Activated T-helper 2 cell treated with anti-CD3 and anti-CD28 coated beads, Interferon-gamma antibody, Interleukin-2, Interleukin-4, amounts not matched to agents 10 μg/mL and 5 μg/mL and 100 μg/mL, durations not matched to agents 14 hours and 24 hours and 36 hours (primary cell): ENCODE measurements at regions of chr20 and their contacts with region 1.

Region 1: GRCh38 chr20:2752567-2753460 is 47.6 kb downstream of the CPXM1 start:
- DNase-seq: peak; percentile 31
- H3K4me3 Mint-ChIP-seq: peak overlapping the region; percentile 77
- H3K27ac Mint-ChIP-seq: no peak overlapping the region
- H3K4me1 Mint-ChIP-seq: peaks cover 16% of the 10 kb centered on the region
- H3K27me3 Mint-ChIP-seq: peaks cover 54% of the 10 kb centered on the region

Region 2: GRCh38 chr20:2273634-2274302 is 479.0 kb before region 1 on chr20:
- intact Hi-C with region 1: no loop called
- DNase-seq: no peak
- H3K4me3 Mint-ChIP-seq: no peak overlapping the region
- H3K27ac Mint-ChIP-seq: no peak overlapping the region
- H3K4me1 Mint-ChIP-seq: no peaks in the 10 kb centered on the region
- H3K27me3 Mint-ChIP-seq: peaks cover 4% of the 10 kb centered on the region

Region 3: DNA sequence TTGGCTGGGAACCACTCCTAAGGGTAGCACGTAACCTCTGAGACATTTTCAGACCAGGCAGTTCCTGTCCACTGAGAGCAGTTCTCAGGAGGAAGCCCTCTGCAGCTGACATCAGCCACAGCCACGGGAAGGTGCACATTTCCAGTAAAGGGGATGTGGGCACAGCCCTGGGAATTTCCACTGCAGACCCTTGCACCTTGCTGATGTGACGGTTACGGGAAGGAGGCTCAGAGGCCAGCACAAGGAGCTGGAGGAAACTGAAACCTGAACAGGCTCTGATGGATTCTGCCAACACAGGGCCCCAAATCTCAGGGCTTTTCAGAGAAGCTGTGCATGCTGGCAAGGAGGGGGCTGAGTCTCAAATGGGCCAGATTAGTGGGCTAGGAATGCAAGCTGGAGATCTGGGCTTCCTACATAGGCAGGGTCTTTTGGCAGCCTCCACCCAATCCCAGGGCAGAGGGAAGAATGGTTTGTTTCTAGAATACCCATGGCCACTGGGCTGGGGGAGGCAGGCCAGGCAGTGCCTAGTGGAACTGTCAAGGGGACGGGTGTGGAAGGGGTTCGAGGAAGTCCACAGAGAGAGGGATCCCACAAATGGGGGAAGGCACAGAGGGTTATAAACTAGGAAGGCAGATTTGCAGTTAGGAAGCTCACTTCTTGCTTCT is 46.0 kb before region 1 on chr20:
- intact Hi-C with region 1: no loop called
- DNase-seq: no peak
- H3K4me3 Mint-ChIP-seq: no peak overlapping the region
- H3K27ac Mint-ChIP-seq: no peak overlapping the region
- H3K4me1 Mint-ChIP-seq: peaks cover 5% of the 10 kb centered on the region
- H3K27me3 Mint-ChIP-seq: no peaks in the 10 kb centered on the region

Region 4: GRCh38 chr20:2800521-2801285 is 47.9 kb after region 1 on chr20 and contains the start of gene CPXM1:
- intact Hi-C with region 1: loop called (anchors 5 kb)
- DNase-seq: no peak
- H3K4me3 Mint-ChIP-seq: peak within 1 kb of the TSS; percentile 79
- H3K27ac Mint-ChIP-seq: peak within 1 kb of the TSS; percentile 24
- H3K4me1 Mint-ChIP-seq: peaks cover 17% of the 10 kb centered on the region
- H3K27me3 Mint-ChIP-seq: peaks cover 48% of the 10 kb centered on the region
- total RNA-seq, gene CPXM1: 1.3 and 1.5 TPM in 2 replicates

Region 5: DNA sequence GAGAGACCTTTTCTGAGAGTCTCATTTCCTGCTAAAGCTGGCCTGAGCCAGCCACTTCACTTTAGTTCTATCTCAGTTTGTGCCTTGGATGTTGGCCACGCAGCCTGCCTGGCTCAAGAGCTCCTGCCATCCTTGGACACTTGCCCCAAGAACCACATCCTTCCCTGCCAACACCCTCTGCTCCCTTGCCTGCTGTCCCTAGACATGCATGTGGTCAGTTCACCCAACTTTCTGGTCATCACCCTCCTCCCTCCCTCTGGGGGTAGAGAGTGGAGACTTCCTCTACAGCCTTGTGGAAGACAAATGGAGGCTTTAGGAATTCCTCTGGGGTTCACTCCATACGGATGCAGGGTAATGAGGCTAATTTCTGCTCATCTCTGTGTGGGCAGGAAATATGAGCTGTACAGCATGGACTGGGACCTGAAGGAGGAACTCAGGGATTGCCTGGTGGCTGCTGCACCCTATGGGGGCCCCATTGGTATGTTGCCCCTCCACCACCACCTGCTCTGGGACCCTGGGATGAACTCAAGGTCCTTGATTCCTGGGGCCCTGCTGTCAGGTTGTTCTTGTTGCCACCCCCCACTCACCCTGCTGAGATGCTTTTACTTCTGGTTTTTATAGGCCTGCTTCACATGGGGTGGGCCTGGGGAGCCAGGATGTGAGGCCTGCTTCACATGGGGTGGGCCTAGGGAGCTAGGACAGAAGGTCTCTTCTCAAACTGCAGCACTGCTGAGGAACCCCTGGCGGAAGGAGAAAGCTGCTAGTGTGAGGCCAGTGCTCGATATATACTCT is 106.7 kb after region 1 on chr20:
- intact Hi-C with region 1: loop called (anchors 10 kb)
- DNase-seq: no peak
- H3K4me3 Mint-ChIP-seq: no peak overlapping the region
- H3K27ac Mint-ChIP-seq: no peak overlapping the region
- H3K4me1 Mint-ChIP-seq: no peaks in the 10 kb centered on the region
- H3K27me3 Mint-ChIP-seq: no peaks in the 10 kb centered on the region